Activated T-helper 2 cell treated with anti-CD3 and anti-CD28 coated beads, Interferon-gamma antibody, Interleukin-2, Interleukin-4, amounts not matched to agents 10 μg/mL and 5 μg/mL and 100 μg/mL, durations not matched to agents 14 hours and 24 hours and 36 hours (primary cell): ENCODE measurements at regions of chr3 and their contacts with region 1.

Region 1: GRCh38 chr3:112136959-112137693 is 4.1 kb upstream of the GCSAM start:
- DNase-seq: no peak
- H3K4me3 Mint-ChIP-seq: no peak overlapping the region
- H3K27ac Mint-ChIP-seq: no peak overlapping the region
- H3K4me1 Mint-ChIP-seq: peaks cover 53% of the 10 kb centered on the region
- H3K27me3 Mint-ChIP-seq: no peaks in the 10 kb centered on the region

Region 2: GRCh38 chr3:111539351-111540331 is 597.5 kb before region 1 on chr3:
- intact Hi-C with region 1: no loop called
- DNase-seq: peak; percentile 36
- H3K4me3 Mint-ChIP-seq: peak overlapping the region; percentile 69
- H3K27ac Mint-ChIP-seq: peak overlapping the region; percentile 85
- H3K4me1 Mint-ChIP-seq: peaks cover 66% of the 10 kb centered on the region
- H3K27me3 Mint-ChIP-seq: no peaks in the 10 kb centered on the region

Region 3: GRCh38 chr3:112149136-112149535 is 12.0 kb after region 1 on chr3:
- intact Hi-C with region 1: no loop called
- DNase-seq: no peak
- H3K4me3 Mint-ChIP-seq: no peak overlapping the region
- H3K27ac Mint-ChIP-seq: no peak overlapping the region
- H3K4me1 Mint-ChIP-seq: no peaks in the 10 kb centered on the region
- H3K27me3 Mint-ChIP-seq: no peaks in the 10 kb centered on the region

Region 4: GRCh38 chr3:112303764-112304325 is 166.7 kb after region 1 on chr3:
- intact Hi-C with region 1: loop called (anchors 5 kb)
- DNase-seq: no peak
- H3K4me3 Mint-ChIP-seq: no peak overlapping the region
- H3K27ac Mint-ChIP-seq: no peak overlapping the region
- H3K4me1 Mint-ChIP-seq: peaks cover 6% of the 10 kb centered on the region
- H3K27me3 Mint-ChIP-seq: no peaks in the 10 kb centered on the region

Region 5: GRCh38 chr3:112333381-112334317 is 196.5 kb after region 1 on chr3:
- intact Hi-C with region 1: loop called (anchors 5 kb)
- DNase-seq: peak; percentile 26
- H3K4me3 Mint-ChIP-seq: peak overlapping the region; percentile 90
- H3K27ac Mint-ChIP-seq: peak overlapping the region; percentile 85
- H3K4me1 Mint-ChIP-seq: peaks cover 48% of the 10 kb centered on the region
- H3K27me3 Mint-ChIP-seq: no peaks in the 10 kb centered on the region

Region 6: GRCh38 chr3:112437146-112438022 is 300.3 kb after region 1 on chr3:
- intact Hi-C with region 1: loop called (anchors 10 kb)
- DNase-seq: no peak
- H3K4me3 Mint-ChIP-seq: no peak overlapping the region
- H3K27ac Mint-ChIP-seq: no peak overlapping the region
- H3K4me1 Mint-ChIP-seq: peaks cover 54% of the 10 kb centered on the region
- H3K27me3 Mint-ChIP-seq: no peaks in the 10 kb centered on the region

Region 7: GRCh38 chr3:112531358-112531781 is 394.2 kb after region 1 on chr3:
- intact Hi-C with region 1: loop called (anchors 2 kb)
- DNase-seq: no peak
- H3K4me3 Mint-ChIP-seq: no peak overlapping the region
- H3K27ac Mint-ChIP-seq: no peak overlapping the region
- H3K4me1 Mint-ChIP-seq: peaks cover 4% of the 10 kb centered on the region
- H3K27me3 Mint-ChIP-seq: no peaks in the 10 kb centered on the region